MCF 10A (cell line): ENCODE measurements at regions of chr5 and their contacts with region 1.

Region 1: DNA sequence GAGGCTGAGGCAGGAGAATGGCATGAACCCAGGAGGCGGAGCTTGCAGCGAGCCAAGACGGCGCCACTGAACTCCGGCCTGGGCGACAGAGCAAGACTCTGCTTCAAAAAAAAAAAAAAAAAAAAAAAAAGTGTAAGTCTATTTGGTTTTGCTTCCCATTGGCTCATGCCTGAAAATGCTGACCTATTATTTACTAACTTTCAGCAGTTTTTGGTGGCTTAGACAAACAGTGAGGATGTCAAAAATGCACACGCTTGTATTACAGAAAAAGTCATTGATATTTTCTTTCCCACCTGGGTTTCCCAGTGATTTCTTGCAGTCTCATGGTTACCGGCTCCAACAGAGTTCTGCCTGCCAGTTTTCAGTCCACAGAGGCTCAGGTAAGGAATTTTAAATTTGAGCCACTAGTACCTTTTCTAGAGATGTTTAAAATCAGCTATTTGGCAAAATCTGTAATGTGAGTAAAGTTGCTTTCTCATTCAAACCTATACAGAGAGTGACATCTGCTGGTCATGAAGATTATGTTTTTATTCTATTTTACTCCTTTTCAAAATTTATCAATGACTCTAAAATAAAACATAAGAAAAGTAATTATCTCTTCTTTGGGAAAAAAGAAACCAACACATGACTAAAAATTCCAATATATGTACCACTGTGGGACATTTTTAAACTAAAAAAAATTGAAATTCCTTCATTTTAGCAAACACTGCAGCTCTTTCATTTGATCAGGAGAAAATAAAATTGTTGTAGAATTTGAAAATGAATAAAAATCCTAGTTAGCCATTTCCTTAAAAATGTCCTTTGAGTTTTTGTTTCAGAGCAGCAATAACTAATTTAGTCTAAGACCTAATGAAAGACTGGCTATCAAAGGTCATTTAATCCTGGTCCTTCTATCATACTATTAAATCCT is 8.8 kb downstream of the FAM200C start:
- DNase-seq: peak; percentile 47
- H3K4me3 Mint-ChIP-seq: no peak overlapping the region
- H3K27ac Mint-ChIP-seq: no peak overlapping the region
- H3K4me1 Mint-ChIP-seq: no peaks in the 10 kb centered on the region
- H3K27me3 Mint-ChIP-seq: no peaks in the 10 kb centered on the region
- CTCF ChIP-seq: peak; percentile 64

Region 2: DNA sequence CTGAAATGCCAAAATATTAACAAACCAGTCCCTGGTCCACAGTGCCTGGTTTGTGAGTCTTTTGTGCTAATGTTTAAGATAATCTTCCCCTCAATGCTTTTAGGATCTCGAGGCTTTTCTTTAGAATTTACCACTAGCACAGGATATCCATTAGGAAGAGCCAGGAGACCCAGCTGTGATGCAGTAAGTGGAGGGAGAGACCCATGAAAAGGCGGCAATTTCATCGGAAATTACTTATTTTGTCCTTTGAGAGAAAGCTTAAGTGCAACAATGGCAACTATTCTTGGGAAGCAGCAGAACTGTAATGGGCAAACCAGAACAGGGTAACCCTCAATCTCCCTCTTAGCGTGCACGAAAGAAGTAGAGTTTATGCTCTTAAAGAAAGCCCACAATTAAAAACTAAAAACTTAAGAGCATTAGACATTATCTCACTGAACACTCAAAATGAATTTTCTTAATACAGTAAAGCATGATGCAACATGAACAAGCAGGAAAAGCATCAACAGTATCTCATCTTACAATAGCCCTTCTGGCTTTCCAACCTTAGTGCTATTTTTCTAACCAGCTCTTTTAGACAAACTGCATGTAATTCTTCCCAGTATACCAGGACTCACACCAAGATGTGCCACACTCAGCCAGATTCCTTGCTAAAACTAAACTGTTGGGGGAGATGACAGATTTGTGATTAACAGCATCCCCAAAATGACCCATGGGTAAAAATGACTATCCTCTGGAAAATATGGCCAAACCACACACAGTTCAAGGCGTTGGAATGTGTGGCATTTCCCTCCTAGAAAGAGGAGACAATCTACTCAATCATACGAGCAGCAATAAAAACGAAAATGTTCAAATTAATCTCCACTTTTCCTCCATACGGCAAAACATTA is 308.2 kb before region 1 on chr5:
- CTCF ChIA-PET with region 1: interaction called, 8 read pairs
- POLR2A ChIA-PET with region 1: no interaction called
- intact Hi-C with region 1: loop called (anchors 1 kb)
- DNase-seq: peak; percentile 61
- H3K4me3 Mint-ChIP-seq: no peak overlapping the region
- H3K27ac Mint-ChIP-seq: no peak overlapping the region
- H3K4me1 Mint-ChIP-seq: peaks cover 17% of the 10 kb centered on the region
- H3K27me3 Mint-ChIP-seq: no peaks in the 10 kb centered on the region
- CTCF ChIP-seq: no peak

Region 3: GRCh38 chr5:160363211-160363610 is 27.8 kb before region 1 on chr5:
- CTCF ChIA-PET with region 1: interaction called, 13 read pairs
- POLR2A ChIA-PET with region 1: interaction called, 3 read pairs
- intact Hi-C with region 1: no loop called
- DNase-seq: no peak
- H3K4me3 Mint-ChIP-seq: no peak overlapping the region
- H3K27ac Mint-ChIP-seq: no peak overlapping the region
- H3K4me1 Mint-ChIP-seq: peaks cover 7% of the 10 kb centered on the region
- H3K27me3 Mint-ChIP-seq: no peaks in the 10 kb centered on the region
- CTCF ChIP-seq: no peak

Region 4: GRCh38 chr5:160379511-160379910 is 11.5 kb before region 1 on chr5:
- CTCF ChIA-PET with region 1: interaction called, 25 read pairs
- POLR2A ChIA-PET with region 1: interaction called, 6 read pairs
- intact Hi-C with region 1: no loop called
- DNase-seq: no peak
- H3K4me3 Mint-ChIP-seq: no peak overlapping the region
- H3K27ac Mint-ChIP-seq: no peak overlapping the region
- H3K4me1 Mint-ChIP-seq: no peaks in the 10 kb centered on the region
- H3K27me3 Mint-ChIP-seq: peaks cover 26% of the 10 kb centered on the region
- CTCF ChIP-seq: no peak